Posterior vena cava (tissue), 2 donors: ENCODE measurements at regions of chr4 and their contacts with region 1.

Region 1: DNA sequence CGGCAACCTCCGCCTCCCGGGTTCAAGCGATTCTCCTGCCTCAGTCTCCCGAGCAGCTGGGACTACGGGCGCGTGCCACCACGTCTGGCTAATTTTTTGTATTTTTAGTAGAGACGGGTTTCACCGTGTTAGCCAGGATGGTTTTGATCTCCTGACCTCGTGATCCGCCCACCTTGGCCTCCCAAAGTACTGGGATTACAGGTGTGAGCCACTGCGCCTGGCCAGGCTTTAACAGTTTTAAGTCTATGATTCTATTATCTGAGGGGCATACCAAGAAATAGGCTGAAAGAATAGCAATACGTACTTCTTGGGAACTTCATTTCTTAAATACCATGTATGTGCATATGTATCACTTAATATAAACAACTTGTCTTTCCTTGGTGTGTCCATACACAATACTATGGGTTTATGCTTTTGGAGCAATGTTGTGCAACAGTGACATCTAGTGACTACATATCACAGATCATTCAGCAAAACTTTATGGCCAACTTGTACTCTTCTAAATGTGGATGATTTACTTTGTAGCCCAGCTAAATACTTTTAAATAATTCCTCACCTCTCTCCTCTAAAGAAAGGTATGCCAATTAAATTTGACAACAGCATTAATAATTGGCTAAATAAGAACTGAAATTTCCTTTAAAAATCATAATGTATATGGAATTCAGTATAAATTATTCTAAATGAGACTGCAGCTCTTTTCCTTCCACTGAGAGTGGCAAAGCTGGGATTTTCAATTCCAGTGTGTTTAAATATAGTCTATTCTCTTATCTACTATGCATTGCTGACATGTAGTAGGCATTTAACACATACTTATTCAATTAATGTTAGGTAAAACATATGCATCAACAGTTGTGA is 10.4 kb downstream of the SLC9B1 start:
- DNase-seq: no peak

Region 2: GRCh38 chr4:102449751-102450352 is 559.2 kb before region 1 on chr4:
- intact Hi-C with region 1: loop called in 1 of 2 experiments (anchors 5 kb)
- DNase-seq: no peak

Region 3: DNA sequence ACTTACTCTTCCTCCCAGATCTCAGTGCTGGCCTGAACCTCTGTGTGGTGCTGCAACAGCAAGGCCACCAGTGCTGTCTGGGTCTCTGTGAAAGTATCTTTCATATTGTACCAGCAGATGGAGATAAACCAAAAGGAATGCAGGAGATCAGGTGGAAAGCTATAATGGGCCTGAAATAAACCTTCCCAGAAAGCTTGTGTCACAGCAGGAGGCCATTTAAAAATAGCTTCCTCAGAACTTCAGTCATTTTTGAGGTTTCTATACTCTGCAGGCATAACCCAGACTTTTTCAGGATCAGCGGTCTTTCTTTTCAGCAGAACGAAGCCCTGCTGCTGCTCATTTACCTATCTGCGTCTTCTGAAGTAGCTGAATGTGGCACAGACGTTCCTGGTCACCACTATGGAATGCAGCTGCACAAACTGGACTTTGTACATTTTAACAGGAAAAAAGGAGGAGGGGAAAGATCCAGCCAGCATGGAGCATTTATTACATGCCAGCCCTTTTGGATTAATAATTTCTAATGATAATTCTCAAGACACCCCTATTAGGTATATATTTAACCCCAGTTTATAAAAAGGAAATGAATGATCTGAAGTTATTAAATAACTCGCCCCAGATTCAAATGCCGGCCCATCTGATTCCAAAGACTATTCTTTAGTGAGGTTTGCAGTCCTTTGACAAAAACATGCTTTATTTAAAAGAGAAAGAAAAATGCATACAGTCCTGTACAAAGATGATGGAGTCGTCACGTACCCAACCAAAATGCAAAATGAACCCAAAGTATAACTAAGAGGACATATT is 388.2 kb before region 1 on chr4:
- intact Hi-C with region 1: loop called in 1 of 2 experiments (anchors 5 kb)
- DNase-seq: no peak

Region 4: GRCh38 chr4:102632241-102633065 is 376.6 kb before region 1 on chr4:
- intact Hi-C with region 1: loop called in 1 of 2 experiments (anchors 5 kb)
- DNase-seq: no peak

Region 5: GRCh38 chr4:102994803-102995202 is 14.3 kb before region 1 on chr4:
- intact Hi-C with region 1: no loop called
- DNase-seq: no peak

Region 6: DNA sequence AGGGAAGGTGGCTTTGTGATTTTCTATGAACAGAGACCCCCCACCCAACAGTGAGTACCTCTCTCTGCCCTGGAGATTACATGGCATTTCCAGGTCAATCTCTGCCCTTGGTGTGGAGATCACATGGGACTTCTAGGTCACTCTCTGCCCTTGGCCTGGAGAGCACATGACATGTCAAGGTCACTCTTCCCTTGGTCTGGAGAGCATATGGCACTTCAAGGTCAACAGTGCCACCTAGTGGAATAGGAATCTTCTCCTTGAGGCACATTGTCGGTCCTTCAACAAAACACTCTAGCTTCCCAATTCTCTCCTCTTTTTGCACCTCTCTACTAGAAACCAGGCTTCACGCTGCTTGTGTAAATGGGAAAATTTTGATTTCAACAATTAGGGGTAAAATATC is 776.9 kb after region 1 on chr4:
- intact Hi-C with region 1: no loop called
- DNase-seq: no peak